Common myeloid progenitor, CD34-positive (primary cell): ENCODE measurements at regions of chr7 and their contacts with region 1.

Region 1: DNA sequence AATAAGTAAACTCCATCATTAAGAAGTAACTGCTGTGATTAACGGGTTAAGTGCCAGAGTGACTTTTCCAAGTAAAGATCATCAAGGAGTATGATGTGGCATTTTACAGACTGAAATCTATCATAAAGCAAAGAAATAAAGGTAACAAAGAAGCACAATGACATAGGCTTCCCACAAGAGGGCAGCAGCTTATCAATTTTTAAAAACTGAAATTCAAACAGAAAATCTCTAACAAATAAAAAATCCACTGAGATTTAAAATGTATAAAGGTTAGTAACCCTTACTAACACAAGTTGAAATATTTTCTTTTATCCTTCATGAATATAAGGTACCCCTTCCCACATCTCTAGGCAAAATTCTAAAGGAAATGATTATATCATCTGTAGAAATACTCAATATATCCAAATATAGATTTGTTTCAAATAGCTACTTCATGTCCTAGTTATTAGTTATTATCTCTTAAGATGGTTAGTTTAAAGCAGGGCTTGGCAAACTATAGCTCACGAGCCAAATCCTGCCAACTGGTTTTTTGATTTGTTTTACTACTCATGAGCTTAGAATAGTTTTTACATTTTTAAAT is 29.2 kb downstream of the FAM3C start:
- DNase-seq: peak; percentile 46 to 76 (median 68)
- H3K4me3 ChIP-seq: no peak overlapping the region
- H3K27ac ChIP-seq: no peak overlapping the region
- H3K4me1 ChIP-seq: peaks cover 0 to 4% (median 0%) of the 10 kb centered on the region in 4 experiments
- H3K27me3 ChIP-seq: no peaks in the 10 kb centered on the region

Region 2: GRCh38 chr7:121351679-121352078 is 15.3 kb before region 1 on chr7:
- CTCF ChIA-PET with region 1: interaction called, 12 read pairs
- POLR2A ChIA-PET with region 1: no interaction called
- DNase-seq: peak in 1 of 3 donors; percentile 13
- H3K4me3 ChIP-seq: no peak overlapping the region
- H3K27ac ChIP-seq: no peak overlapping the region
- H3K4me1 ChIP-seq: peaks cover 0 to 6% (median 0%) of the 10 kb centered on the region in 4 experiments
- H3K27me3 ChIP-seq: no peaks in the 10 kb centered on the region

Region 3: GRCh38 chr7:121379930-121380329 is 13.0 kb after region 1 on chr7:
- CTCF ChIA-PET with region 1: interaction called, 26 read pairs
- POLR2A ChIA-PET with region 1: no interaction called
- DNase-seq: no peak
- H3K4me3 ChIP-seq: no peak overlapping the region
- H3K27ac ChIP-seq: no peak overlapping the region
- H3K4me1 ChIP-seq: peaks cover 0 to 37% (median 13%) of the 10 kb centered on the region in 4 experiments
- H3K27me3 ChIP-seq: no peaks in the 10 kb centered on the region

Region 4: GRCh38 chr7:121385800-121386179 is 18.8 kb after region 1 on chr7:
- CTCF ChIA-PET with region 1: interaction called, 26 read pairs
- POLR2A ChIA-PET with region 1: no interaction called
- DNase-seq: peak in 2 of 3 donors; percentile 85 to 92
- H3K4me3 ChIP-seq: no peak overlapping the region
- H3K27ac ChIP-seq: no peak overlapping the region
- H3K4me1 ChIP-seq: peaks cover 5 to 54% (median 20%) of the 10 kb centered on the region in 4 experiments
- H3K27me3 ChIP-seq: no peaks in the 10 kb centered on the region

Region 5: DNA sequence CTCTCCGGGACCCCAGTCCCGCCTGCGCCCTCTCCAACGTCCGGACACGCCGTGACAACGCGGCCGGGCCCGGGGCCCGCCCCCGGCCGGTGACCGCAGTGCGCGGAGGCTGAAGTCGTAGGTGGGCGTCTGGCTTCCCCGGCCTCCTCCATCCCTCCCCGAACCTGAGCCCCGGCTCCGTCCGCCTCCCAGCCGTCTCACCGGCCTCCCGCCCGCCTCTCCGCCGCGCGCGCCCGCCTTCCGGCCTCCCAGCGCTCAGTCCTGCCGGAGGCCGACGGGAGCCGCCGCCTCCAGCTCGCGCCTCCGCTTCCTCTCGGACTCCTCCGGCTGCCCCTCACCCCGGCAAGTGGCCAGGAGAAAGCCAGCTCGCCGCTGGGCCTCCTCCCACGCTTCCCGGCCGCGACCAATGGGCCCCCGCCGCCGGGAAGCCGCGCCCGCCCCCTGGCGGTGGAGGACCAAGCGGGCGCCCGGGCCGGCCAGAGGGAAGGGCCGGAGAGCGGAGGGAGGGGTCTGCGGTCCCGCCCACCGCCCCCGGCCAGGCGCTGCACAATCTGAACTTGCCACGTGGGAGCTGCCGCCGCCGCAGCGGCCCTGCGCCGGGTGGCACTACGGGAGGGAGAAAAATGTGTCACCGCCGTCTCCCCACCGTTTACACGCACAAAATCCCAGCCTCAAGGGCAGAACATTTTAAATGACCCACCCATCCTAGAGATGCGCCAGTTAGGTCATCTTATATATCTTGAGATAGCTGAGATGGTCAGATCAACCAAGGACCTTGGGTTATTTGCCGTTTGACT is 29.2 kb after region 1 on chr7 and contains the start of gene FAM3C:
- CTCF ChIA-PET with region 1: interaction called, 67 read pairs
- POLR2A ChIA-PET with region 1: interaction called, 3 read pairs
- DNase-seq: peak; percentile 81 to 86 (median 82)
- H3K4me3 ChIP-seq: peak within 1 kb of the TSS; percentile 80 to 94 (median 89)
- H3K27ac ChIP-seq: peak within 1 kb of the TSS in 1 of 2 experiments; percentile 74
- H3K4me1 ChIP-seq: peaks cover 3 to 9% (median 4%) of the 10 kb centered on the region in 4 experiments
- H3K27me3 ChIP-seq: no peaks in the 10 kb centered on the region

Region 6: DNA sequence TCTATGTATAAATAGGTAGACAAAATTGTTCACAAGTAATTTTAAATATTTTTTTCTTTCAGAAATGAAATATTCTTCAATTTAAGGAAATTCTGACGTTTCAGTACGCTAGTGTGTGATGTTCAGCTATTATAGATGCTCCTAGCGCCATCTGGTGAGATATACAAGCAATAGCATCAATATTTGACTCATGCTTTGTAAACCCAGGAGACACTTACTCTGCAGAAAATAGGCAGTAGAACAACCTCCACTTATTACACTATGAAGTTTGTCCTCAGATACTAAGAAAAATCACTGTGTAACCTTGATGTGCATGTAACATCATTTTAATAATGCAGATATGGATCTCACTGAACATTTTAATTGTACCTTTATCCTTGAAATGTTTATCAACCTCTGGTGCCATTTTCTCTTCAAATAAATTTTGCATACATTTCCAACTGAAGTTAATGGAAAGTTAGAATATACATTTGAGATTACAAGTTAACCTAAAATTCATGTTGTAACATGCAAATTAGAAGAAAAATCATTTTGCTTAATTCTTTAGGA is 180.7 kb after region 1 on chr7:
- CTCF ChIA-PET with region 1: interaction called, 59 read pairs
- POLR2A ChIA-PET with region 1: no interaction called
- DNase-seq: peak; percentile 53 to 79 (median 74)
- H3K4me3 ChIP-seq: no peak overlapping the region
- H3K27ac ChIP-seq: no peak overlapping the region
- H3K4me1 ChIP-seq: peaks cover 0 to 5% (median 0%) of the 10 kb centered on the region in 4 experiments
- H3K27me3 ChIP-seq: no peaks in the 10 kb centered on the region